SK-N-SH (cell line): ENCODE measurements at regions of chr14 and their contacts with region 1.

Region 1: GRCh38 chr14:64636208-64636979 is 67.8 kb upstream of the PLEKHG3 start:
- DNase-seq: peak; percentile 83
- H3K4me3 ChIP-seq: no peak overlapping the region
- H3K27ac ChIP-seq: no peak overlapping the region
- H3K4me1 ChIP-seq: peaks cover 0 to 3% of the 10 kb centered on the region in 2 experiments; a peak in 2 of 4 replicates
- H3K27me3 ChIP-seq: no peaks in the 10 kb centered on the region
- CTCF ChIP-seq: peak; percentile 90
- EP300 ChIP-seq: no peak
- RAD21 ChIP-seq: peak; percentile 79

Region 2: GRCh38 chr14:64338616-64339316 is 297.6 kb before region 1 on chr14:
- CTCF ChIA-PET with region 1: interaction called, 12 read pairs
- POLR2A ChIA-PET with region 1: interaction called, 4 read pairs
- DNase-seq: peak; percentile 96
- H3K4me3 ChIP-seq: peak overlapping the region; percentile 85 to 90
- H3K27ac ChIP-seq: peak overlapping the region; percentile 45 to 97; a peak in 3 of 4 replicates
- H3K4me1 ChIP-seq: peaks cover 0 to 7% of the 10 kb centered on the region in 2 experiments; a peak in 2 of 4 replicates
- H3K27me3 ChIP-seq: no peaks in the 10 kb centered on the region
- CTCF ChIP-seq: no peak
- EP300 ChIP-seq: no peak
- RAD21 ChIP-seq: no peak

Region 3: DNA sequence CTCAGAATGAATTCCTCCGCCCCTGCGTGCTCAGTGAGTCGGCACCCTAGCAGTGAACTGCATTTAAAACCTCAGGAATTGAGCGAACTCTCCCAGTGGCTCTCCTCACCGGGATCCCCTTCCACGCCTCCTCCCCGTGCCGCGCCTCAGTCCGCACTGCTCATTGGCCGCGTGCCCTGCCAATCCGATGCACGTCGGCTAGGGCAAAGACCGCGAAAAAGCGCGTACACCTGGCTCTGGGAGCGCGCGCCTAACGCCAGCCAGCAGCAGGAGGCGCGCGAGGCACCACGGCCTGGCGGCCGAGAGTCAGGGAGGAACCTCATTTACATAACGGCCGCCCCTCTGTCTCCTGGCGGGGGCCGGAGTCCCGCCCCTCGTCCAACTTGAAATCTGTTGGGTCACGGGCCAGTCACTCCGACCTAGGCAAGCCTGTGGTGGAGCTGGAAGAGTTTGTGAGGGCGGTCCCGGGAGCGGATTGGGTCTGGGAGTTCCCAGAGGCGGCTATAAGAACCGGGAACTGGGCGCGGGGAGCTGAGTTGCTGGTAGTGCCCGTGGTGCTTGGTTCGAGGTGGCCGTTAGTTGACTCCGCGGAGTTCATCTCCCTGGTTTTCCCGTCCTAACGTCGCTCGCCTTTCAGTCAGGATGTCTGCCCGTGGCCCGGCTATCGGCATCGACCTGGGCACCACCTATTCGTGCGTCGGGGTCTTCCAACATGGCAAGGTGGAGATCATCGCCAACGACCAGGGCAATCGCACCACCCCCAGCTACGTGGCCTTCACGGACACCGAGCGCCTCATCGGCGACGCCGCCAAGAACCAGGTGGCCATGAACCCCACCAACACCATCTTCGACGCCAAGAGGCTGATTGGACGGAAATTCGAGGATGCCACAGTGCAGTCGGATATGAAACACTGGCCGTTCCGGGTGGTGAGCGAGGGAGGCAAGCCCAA is 95.9 kb before region 1 on chr14 and contains the start of gene HSPA2:
- CTCF ChIA-PET with region 1: interaction called, 16 read pairs
- POLR2A ChIA-PET with region 1: interaction called, 5 read pairs
- DNase-seq: peak; percentile 98
- H3K4me3 ChIP-seq: peak within 1 kb of the TSS; percentile 61 to 65
- H3K27ac ChIP-seq: peak within 1 kb of the TSS; percentile 79 to 94
- H3K4me1 ChIP-seq: peaks cover 0 to 5% of the 10 kb centered on the region in 2 experiments; a peak in 2 of 4 replicates
- H3K27me3 ChIP-seq: no peaks in the 10 kb centered on the region
- CTCF ChIP-seq: peak; percentile 73
- EP300 ChIP-seq: no peak
- RAD21 ChIP-seq: peak; percentile 64
- polyA plus RNA-seq, gene HSPA2: 13.9 and 20.8 TPM in 2 replicates

Region 4: GRCh38 chr14:64612021-64612380 is 24.4 kb before region 1 on chr14:
- CTCF ChIA-PET with region 1: interaction called, 17 read pairs
- POLR2A ChIA-PET with region 1: no interaction called
- DNase-seq: no peak
- H3K4me3 ChIP-seq: no peak overlapping the region
- H3K27ac ChIP-seq: peak overlapping the region; percentile 74 to 78; a peak in 3 of 4 replicates
- H3K4me1 ChIP-seq: peaks cover 5 to 9% of the 10 kb centered on the region in 2 experiments; a peak in 3 of 4 replicates
- H3K27me3 ChIP-seq: no peaks in the 10 kb centered on the region
- CTCF ChIP-seq: no peak
- EP300 ChIP-seq: peak in 1 of 2 experiments; percentile 50; a peak in 1 of 4 replicates
- RAD21 ChIP-seq: no peak

Region 5: GRCh38 chr14:64625475-64626269 is 10.7 kb before region 1 on chr14:
- CTCF ChIA-PET with region 1: interaction called, 64 read pairs
- POLR2A ChIA-PET with region 1: no interaction called
- DNase-seq: no peak
- H3K4me3 ChIP-seq: no peak overlapping the region
- H3K27ac ChIP-seq: no peak overlapping the region
- H3K4me1 ChIP-seq: peaks cover 6 to 14% of the 10 kb centered on the region in 2 experiments; a peak in 2 of 4 replicates
- H3K27me3 ChIP-seq: no peaks in the 10 kb centered on the region
- CTCF ChIP-seq: no peak
- EP300 ChIP-seq: no peak
- RAD21 ChIP-seq: no peak

Region 6: DNA sequence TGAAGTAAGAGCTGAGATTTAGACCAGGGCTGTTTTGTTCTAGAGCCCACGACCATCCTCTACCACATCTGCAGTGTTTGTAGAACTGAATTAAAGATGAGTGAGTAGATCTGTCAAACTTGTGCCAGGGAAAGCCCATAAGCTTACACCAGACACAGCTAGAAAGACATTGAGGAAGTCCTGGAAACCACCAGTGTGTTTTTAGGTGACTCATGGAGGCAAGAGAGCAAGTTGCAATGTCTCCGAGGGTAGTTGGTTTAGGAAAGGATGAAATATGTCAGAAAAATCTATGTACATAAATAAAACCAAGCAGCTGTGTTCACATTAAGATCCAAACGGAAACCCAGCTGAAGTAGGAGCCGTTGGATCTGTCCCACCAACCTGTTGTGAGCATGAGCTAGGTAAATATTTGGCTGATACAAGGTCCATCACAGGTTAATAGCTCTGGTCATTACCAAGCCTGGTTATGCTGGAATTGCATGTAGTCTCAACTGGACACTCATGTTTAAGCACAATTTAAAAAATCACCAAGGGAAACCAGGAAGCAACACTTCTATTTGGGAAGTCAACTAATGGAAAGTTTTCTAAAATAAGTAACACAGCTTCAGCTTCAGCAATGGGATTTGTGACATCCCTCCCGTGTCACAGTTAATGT is 18.0 kb after region 1 on chr14:
- CTCF ChIA-PET with region 1: interaction called, 25 read pairs
- POLR2A ChIA-PET with region 1: no interaction called
- DNase-seq: no peak
- H3K4me3 ChIP-seq: no peak overlapping the region
- H3K27ac ChIP-seq: peak overlapping the region in 1 of 2 experiments; percentile 69; a peak in 2 of 4 replicates
- H3K4me1 ChIP-seq: 0 out of 4 replicates have a peak, but pooled peaks cover 0 to 6% of the 10 kb centered on the region in 2 experiments
- H3K27me3 ChIP-seq: no peaks in the 10 kb centered on the region; the same call in 1 of the 2 replicates
- CTCF ChIP-seq: no peak
- EP300 ChIP-seq: no peak
- RAD21 ChIP-seq: no peak

Region 7: DNA sequence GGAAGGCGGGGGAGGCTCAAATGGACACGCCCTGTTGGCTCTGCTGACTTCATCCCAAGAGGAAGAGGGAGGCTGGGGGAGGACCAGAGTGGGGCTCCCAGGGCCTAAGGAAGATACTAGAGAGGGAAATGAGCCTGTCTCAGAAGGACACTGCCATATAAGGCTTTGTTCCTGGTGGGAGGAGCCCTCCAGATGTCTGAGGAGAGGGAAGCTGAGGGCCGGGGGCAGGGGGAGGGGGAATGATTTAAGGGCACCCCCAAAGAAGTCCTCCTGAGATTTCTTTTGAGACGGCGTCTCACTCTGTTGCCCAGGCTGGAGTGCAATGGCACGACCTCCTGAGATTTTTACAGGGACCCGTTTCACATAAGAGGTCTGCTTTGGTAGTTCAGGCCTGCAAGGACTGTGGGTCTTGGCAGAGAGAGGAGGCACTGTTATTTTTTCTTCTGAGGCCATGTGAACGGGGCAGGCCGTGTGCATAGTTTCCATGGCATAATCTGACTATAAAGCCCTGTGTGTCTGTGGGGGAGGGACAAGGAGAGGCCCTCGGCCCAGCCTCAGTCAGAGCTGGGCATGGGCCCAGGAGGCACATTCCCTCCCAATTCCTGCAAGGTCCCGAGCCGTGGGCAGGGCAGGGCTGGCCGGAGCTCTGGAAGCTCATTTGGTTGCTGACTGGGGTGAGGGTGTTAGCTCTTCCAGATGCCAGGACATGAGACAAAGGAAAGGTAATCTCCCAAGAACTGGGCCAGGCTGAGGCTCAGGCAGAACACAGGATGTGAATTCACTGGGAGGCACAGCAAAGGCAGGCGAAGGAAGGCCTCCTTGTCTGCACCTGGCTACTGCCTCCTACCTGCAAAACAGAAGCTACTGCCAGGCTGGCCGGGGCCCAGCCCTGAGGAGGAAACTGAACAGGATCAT is 45.7 kb after region 1 on chr14:
- CTCF ChIA-PET with region 1: interaction called, 13 read pairs
- POLR2A ChIA-PET with region 1: no interaction called
- DNase-seq: no peak
- H3K4me3 ChIP-seq: no peak overlapping the region
- H3K27ac ChIP-seq: peak overlapping the region in 1 of 2 experiments; percentile 18; a peak in 1 of 4 replicates
- H3K4me1 ChIP-seq: peaks cover 0 to 5% of the 10 kb centered on the region in 2 experiments; a peak in 1 of 4 replicates
- H3K27me3 ChIP-seq: no peaks in the 10 kb centered on the region
- CTCF ChIP-seq: no peak
- EP300 ChIP-seq: no peak
- RAD21 ChIP-seq: no peak

Region 8: DNA sequence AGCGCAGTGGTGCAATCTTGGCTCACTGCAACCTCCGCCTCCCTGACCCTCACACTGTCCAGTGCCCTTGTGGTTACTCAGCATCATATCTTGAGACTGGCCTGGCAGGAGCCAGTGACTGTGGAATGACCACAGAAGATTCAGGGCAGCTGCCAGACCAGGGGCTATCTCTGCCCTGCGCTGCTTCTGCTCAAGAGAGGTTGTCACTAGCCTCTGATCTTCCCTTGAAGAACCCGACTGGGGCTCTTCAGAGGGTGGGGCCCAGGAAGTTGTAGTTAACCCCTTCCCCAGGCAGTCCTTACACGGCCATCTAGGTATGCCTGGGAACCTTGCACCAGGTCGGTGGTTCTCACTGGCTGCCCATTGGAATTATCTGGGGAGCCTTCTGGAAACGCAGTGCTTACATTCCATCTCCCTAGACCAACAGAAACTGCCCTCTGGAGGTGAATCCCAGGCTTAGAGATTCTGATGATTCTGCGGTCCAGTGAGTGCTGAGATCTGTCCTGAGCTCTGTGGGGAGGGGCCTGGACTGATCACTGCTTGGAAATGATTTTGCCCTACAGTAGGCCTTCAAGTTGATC is 109.2 kb after region 1 on chr14:
- CTCF ChIA-PET with region 1: no interaction called
- POLR2A ChIA-PET with region 1: no interaction called
- DNase-seq: no peak
- H3K4me3 ChIP-seq: no peak overlapping the region
- H3K27ac ChIP-seq: no peak overlapping the region
- H3K4me1 ChIP-seq: no peaks in the 10 kb centered on the region
- H3K27me3 ChIP-seq: no peaks in the 10 kb centered on the region
- CTCF ChIP-seq: no peak
- EP300 ChIP-seq: no peak
- RAD21 ChIP-seq: no peak